Calu3 (cell line): ENCODE measurements at regions of chr12 and their contacts with region 1.

Region 1: DNA sequence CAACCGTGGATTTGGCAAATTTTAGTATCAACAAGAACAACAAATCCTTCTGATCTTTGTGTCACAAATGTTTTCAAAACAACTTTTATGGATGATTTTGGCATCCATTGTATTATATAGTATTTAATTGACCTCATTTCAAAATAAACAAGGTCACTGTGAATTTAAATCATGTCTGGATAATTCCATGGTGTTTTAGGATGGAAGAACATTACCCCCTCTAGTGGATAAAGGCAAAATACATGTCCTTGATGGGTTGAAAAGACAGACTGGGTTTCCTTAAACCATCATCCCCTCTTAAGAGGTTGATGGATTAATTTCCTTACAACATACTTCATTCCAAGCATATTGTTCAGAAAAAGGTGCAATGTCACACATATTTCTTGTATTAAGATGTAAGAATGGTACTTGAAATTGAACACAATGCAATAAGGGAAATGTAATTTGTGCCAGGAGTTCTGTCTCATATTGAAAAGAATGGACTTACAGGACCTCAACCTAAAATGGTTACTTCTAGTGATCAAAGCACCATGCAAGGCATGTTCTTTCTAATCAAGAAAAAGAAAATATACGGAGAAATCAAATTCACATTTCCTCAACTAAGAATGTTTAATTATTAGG is 352.0 kb downstream of the BCAT1 start:
- DNase-seq: no peak
- H3K4me3 Mint-ChIP-seq: no peak overlapping the region
- H3K27ac Mint-ChIP-seq: no peak overlapping the region
- H3K4me1 Mint-ChIP-seq: no peaks in the 10 kb centered on the region
- H3K27me3 Mint-ChIP-seq: peaks cover 32% of the 10 kb centered on the region
- CTCF ChIP-seq: peak; percentile 32

Region 2: DNA sequence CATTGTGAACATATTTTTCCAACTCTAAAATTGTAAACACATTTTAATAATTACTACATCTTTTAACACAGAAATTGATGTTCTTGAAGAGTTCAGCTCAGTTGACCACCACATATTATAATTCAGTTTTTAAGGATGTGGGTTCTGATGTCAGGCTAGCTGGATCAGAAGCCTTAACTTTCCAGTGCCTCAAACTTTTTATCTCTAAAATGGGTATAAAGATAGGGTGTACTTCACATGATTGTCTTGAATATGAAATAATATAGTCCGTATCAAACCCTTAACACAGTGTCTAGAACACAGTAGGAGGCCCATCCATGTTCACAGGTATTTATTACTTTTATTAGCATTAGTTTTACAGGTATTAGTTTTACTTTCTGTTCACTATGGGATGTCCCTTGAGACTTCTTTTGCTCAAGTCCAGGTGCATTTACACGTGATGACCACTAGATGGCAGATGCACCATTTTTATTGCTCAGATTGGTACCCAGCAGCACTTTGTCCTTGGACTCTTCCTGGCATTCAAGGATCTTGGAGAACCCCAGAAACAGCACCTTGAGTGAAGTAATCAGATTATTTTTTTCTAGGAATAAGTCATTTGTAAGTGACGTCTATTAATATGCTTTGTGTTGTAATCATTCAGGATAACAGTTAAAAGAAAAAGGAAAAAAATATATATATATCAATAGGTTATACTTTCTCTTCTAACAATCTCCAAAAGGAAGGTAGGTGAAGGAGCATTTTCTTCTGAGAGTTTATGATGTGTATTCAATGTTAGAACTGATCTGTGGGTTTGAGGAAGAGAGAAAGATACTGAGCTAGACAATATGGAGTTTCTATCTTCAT is 1391.7 kb before region 1 on chr12:
- CTCF ChIA-PET with region 1: no interaction called
- intact Hi-C with region 1: loop called (anchors 5 kb)
- DNase-seq: peak; percentile 14
- H3K4me3 Mint-ChIP-seq: no peak overlapping the region
- H3K27ac Mint-ChIP-seq: no peak overlapping the region
- H3K4me1 Mint-ChIP-seq: no peaks in the 10 kb centered on the region
- H3K27me3 Mint-ChIP-seq: peaks cover 27% of the 10 kb centered on the region
- CTCF ChIP-seq: peak; percentile 81

Region 3: GRCh38 chr12:24109381-24110039 is 487.4 kb before region 1 on chr12:
- CTCF ChIA-PET with region 1: interaction called, 3 read pairs
- intact Hi-C with region 1: loop called (anchors 5 kb)
- DNase-seq: no peak
- H3K4me3 Mint-ChIP-seq: no peak overlapping the region
- H3K27ac Mint-ChIP-seq: no peak overlapping the region
- H3K4me1 Mint-ChIP-seq: no peaks in the 10 kb centered on the region
- H3K27me3 Mint-ChIP-seq: no peaks in the 10 kb centered on the region
- CTCF ChIP-seq: peak; percentile 24

Region 4: GRCh38 chr12:24278832-24279231 is 318.0 kb before region 1 on chr12:
- CTCF ChIA-PET with region 1: no interaction called
- intact Hi-C with region 1: loop called (anchors 10 kb)
- DNase-seq: no peak
- H3K4me3 Mint-ChIP-seq: no peak overlapping the region
- H3K27ac Mint-ChIP-seq: no peak overlapping the region
- H3K4me1 Mint-ChIP-seq: no peaks in the 10 kb centered on the region
- H3K27me3 Mint-ChIP-seq: no peaks in the 10 kb centered on the region
- CTCF ChIP-seq: no peak

Region 5: GRCh38 chr12:24404086-24404815 is 192.6 kb before region 1 on chr12:
- CTCF ChIA-PET with region 1: no interaction called
- intact Hi-C with region 1: no loop called
- DNase-seq: no peak
- H3K4me3 Mint-ChIP-seq: no peak overlapping the region
- H3K27ac Mint-ChIP-seq: no peak overlapping the region
- H3K4me1 Mint-ChIP-seq: no peaks in the 10 kb centered on the region
- H3K27me3 Mint-ChIP-seq: no peaks in the 10 kb centered on the region
- CTCF ChIP-seq: no peak

Region 6: GRCh38 chr12:24630446-24630845 is 33.6 kb after region 1 on chr12:
- CTCF ChIA-PET with region 1: no interaction called
- intact Hi-C with region 1: no loop called
- DNase-seq: no peak
- H3K4me3 Mint-ChIP-seq: no peak overlapping the region
- H3K27ac Mint-ChIP-seq: no peak overlapping the region
- H3K4me1 Mint-ChIP-seq: no peaks in the 10 kb centered on the region
- H3K27me3 Mint-ChIP-seq: no peaks in the 10 kb centered on the region
- CTCF ChIP-seq: no peak

Region 7: DNA sequence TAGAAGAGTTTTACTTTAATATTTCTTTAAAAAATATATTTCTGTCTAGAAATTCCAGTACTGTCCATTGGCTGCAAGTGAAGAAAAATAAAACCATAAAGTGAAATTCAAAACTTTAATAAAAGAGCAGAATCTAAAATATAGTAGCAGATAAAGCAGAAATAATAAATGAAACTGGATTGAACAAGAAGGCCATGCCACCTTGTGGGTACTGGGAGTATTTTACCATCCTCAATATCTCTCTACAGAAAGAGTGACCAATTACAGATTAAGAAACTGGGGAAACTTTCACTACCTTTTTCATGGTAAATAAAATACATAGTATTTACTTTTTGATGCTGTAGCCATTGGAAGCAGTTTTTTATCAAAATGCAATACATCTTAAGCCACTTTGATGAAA is 131.5 kb after region 1 on chr12:
- CTCF ChIA-PET with region 1: no interaction called
- intact Hi-C with region 1: loop called (anchors 5 kb)
- DNase-seq: no peak
- H3K4me3 Mint-ChIP-seq: no peak overlapping the region
- H3K27ac Mint-ChIP-seq: no peak overlapping the region
- H3K4me1 Mint-ChIP-seq: peaks cover 7% of the 10 kb centered on the region
- H3K27me3 Mint-ChIP-seq: no peaks in the 10 kb centered on the region
- CTCF ChIP-seq: peak; percentile 28